Caco-2 (cell line): ENCODE measurements at regions of chr21 and their contacts with region 1.

Region 1: DNA sequence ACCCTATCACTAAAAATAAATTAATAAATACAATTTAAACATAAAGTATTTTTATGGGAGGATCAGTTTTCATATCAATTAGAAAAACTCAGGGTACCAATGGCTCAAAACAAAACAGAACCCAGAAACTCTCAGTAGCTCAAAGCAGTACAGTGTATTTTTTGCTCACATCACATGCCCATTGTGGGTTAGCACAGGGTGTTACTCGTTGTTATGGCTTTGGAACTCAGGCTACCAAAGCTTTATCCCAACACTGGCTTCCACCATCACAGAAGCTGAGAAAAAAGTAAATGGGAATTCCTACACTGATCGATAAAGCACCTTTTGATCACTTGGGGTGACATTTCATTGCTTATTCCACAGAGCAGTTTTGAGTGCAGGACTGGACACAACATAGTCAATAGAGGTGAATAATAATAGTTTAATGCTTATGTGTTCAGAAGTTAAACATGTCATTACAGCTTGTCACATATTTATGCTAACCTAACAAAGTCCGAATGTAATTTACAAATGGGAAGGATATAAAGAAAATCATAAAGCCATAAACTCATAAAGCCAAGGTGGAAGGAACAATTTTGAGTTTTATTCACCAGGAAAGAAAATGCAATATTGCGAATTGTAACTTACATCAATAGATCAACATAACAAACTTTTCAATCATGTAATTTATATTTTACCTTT is 484.5 kb upstream of the TMPRSS15 start:
- DNase-seq: no peak
- H3K4me3 ChIP-seq: no peak overlapping the region
- H3K4me3 Mint-ChIP-seq: no peak overlapping the region
- H3K27ac Mint-ChIP-seq: no peak overlapping the region
- H3K4me1 ChIP-seq: 0 out of 2 replicates have a peak, but pooled peaks cover 1% of the 10 kb centered on the region
- H3K4me1 Mint-ChIP-seq: peaks cover under 1% of the 10 kb centered on the region
- H3K27me3 ChIP-seq: no peaks in the 10 kb centered on the region
- H3K27me3 Mint-ChIP-seq: no peaks in the 10 kb centered on the region
- CTCF ChIP-seq: no peak

Region 2: GRCh38 chr21:18832950-18833349 is 55.1 kb before region 1 on chr21:
- CTCF ChIA-PET with region 1: no interaction called
- POLR2A ChIA-PET with region 1: no interaction called
- intact Hi-C with region 1: loop called (anchors 10 kb)
- DNase-seq: peak; percentile 37 to 50
- H3K4me3 ChIP-seq: no peak overlapping the region
- H3K4me3 Mint-ChIP-seq: no peak overlapping the region
- H3K27ac Mint-ChIP-seq: peak overlapping the region; percentile 68
- H3K4me1 ChIP-seq: peaks cover 16% of the 10 kb centered on the region
- H3K4me1 Mint-ChIP-seq: peaks cover 13% of the 10 kb centered on the region
- H3K27me3 ChIP-seq: no peaks in the 10 kb centered on the region
- H3K27me3 Mint-ChIP-seq: no peaks in the 10 kb centered on the region
- CTCF ChIP-seq: no peak